ENCODE measurements at regions of chr9 and their contacts with region 1.

Region 1: DNA sequence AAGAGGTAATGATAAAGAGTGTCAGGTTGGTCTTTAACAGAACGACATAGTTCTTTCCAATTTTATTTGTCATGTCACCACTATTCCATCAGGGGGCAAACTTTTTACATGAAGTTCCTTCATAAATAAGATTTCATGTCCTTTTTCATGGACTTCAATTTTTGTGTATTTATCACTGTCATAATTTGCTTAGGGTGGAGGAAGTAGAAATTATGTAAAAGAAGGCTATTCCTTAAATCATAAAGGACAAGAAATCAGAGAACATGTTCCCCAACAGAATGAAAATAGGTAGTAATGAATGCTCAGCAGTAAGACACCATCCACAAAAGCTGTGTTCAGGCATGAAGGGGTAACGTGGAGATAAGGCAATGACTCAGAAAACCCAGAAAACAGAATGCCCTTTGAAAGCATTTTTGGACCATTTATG is 72.7 kb downstream of the ZFAND5 start:
- DNase-seq: peak in 4 of 5 donors; percentile 24 to 37 (median 29)
- H3K4me3 ChIP-seq: no peak overlapping the region
- H3K4me3 Mint-ChIP-seq: no peak overlapping the region
- H3K27ac ChIP-seq: no peak overlapping the region
- H3K27ac Mint-ChIP-seq: no peak overlapping the region
- H3K4me1 ChIP-seq: no peaks in the 10 kb centered on the region
- H3K4me1 Mint-ChIP-seq: peaks cover 0 to 3% (median under 1%) of the 10 kb centered on the region in 4 donors
- H3K27me3 ChIP-seq: no peaks in the 10 kb centered on the region
- H3K27me3 Mint-ChIP-seq: peaks cover 5 to 6% of the 10 kb centered on the region in 2 donors

Region 2: DNA sequence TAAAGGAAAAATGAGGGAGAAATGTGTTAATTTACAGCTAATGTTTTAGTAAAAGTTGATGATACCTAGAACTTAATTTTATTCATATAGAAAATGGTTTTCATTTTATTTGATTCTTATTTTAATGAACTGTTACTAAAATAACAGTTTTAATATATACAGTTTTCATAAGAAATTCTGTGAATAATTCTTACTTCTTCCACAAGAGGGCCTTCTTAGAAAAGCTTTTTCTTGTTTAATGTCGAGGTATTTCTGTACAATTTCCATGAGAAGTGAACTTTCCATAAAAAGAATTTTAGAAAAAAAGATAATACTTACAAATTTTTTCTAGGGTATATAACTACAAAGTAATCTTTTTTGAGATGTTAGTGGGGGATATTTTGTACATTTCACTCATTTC is 1951.7 kb before region 1 on chr9:
- CTCF ChIA-PET with region 1: no interaction called
- POLR2A ChIA-PET with region 1: no interaction called
- intact Hi-C with region 1: no loop called
- DNase-seq: peak in 4 of 5 donors; percentile 13 to 18 (median 16)
- H3K4me3 ChIP-seq: no peak overlapping the region
- H3K4me3 Mint-ChIP-seq: no peak overlapping the region
- H3K27ac ChIP-seq: no peak overlapping the region
- H3K27ac Mint-ChIP-seq: no peak overlapping the region
- H3K4me1 ChIP-seq: peaks cover 3% of the 10 kb centered on the region
- H3K4me1 Mint-ChIP-seq: peaks cover 0 to 4% (median 2%) of the 10 kb centered on the region in 4 donors
- H3K27me3 ChIP-seq: no peaks in the 10 kb centered on the region
- H3K27me3 Mint-ChIP-seq: no peaks in the 10 kb centered on the region

Region 3: GRCh38 chr9:72753266-72753893 is 461.1 kb after region 1 on chr9:
- CTCF ChIA-PET with region 1: interaction called, 4 read pairs
- POLR2A ChIA-PET with region 1: no interaction called
- intact Hi-C with region 1: loop called (anchors 1 kb)
- DNase-seq: no peak
- H3K4me3 ChIP-seq: no peak overlapping the region
- H3K4me3 Mint-ChIP-seq: no peak overlapping the region
- H3K27ac ChIP-seq: no peak overlapping the region
- H3K27ac Mint-ChIP-seq: no peak overlapping the region
- H3K4me1 ChIP-seq: no peaks in the 10 kb centered on the region
- H3K4me1 Mint-ChIP-seq: no peaks in the 10 kb centered on the region
- H3K27me3 ChIP-seq: no peaks in the 10 kb centered on the region
- H3K27me3 Mint-ChIP-seq: peaks cover 4 to 7% of the 10 kb centered on the region in 2 donors

Measured in CD4-positive, alpha-beta memory T cell (primary cell).